Activated T-helper 1 cell treated with anti-CD3 and anti-CD28 coated beads, Interleukin-12 subunit alpha, Interleukin-12 subunit beta, Interleukin-2, Interleukin-4 antibody, amounts not matched to agents 30 ng/mL and 10 ng/mL and 1 ng/mL, durations not matched to agents 14 hours and 24 hours and 36 hours (primary cell): ENCODE measurements at regions of chr4 and their contacts with region 1.

Region 1: DNA sequence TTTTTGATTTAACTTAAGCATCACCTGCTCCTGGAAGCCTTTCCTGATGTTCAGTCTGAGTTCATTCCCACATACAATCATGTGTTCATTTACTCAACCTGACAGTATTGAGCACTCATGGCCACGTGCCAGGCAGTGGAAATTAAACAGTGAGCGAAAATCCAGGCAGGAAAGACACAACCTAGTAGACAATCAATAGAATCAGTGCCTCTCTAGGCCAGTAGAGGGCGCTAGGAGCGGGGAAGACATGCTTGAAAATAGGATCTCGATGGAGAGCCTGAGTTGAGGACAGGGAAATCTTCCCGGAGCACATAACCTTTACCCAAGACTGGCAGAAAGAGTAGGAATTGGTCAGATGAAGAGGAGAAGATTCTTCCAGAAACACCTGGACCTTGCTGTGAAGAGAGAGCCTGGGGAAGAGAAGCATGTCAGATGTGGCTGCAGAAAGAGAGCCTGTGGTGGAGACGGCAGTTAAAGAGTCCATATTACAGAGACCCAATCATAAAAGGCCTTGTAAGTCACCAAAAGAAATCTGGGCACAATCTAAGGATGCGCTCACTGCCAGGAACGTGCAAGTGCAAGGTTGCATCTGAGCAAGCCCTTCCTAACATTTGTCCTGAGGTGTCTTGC is 103.5 kb downstream of the LDB2 start:
- DNase-seq: peak; percentile 1
- H3K4me3 Mint-ChIP-seq: no peak overlapping the region
- H3K27ac Mint-ChIP-seq: no peak overlapping the region
- H3K4me1 Mint-ChIP-seq: no peaks in the 10 kb centered on the region
- H3K27me3 Mint-ChIP-seq: no peaks in the 10 kb centered on the region

Region 2: GRCh38 chr4:16642895-16643294 is 152.0 kb before region 1 on chr4:
- intact Hi-C with region 1: no loop called
- DNase-seq: no peak
- H3K4me3 Mint-ChIP-seq: no peak overlapping the region
- H3K27ac Mint-ChIP-seq: no peak overlapping the region
- H3K4me1 Mint-ChIP-seq: no peaks in the 10 kb centered on the region
- H3K27me3 Mint-ChIP-seq: no peaks in the 10 kb centered on the region

Region 3: GRCh38 chr4:17324386-17324830 is 529.5 kb after region 1 on chr4:
- intact Hi-C with region 1: loop called (anchors 2 kb)
- DNase-seq: peak; percentile 21
- H3K4me3 Mint-ChIP-seq: peak overlapping the region; percentile 61
- H3K27ac Mint-ChIP-seq: no peak overlapping the region
- H3K4me1 Mint-ChIP-seq: peaks cover 10% of the 10 kb centered on the region
- H3K27me3 Mint-ChIP-seq: peaks cover 8% of the 10 kb centered on the region